Transverse colon (tissue), 4 donors: ENCODE measurements at regions of chr5 and their contacts with region 1.

Region 1: DNA sequence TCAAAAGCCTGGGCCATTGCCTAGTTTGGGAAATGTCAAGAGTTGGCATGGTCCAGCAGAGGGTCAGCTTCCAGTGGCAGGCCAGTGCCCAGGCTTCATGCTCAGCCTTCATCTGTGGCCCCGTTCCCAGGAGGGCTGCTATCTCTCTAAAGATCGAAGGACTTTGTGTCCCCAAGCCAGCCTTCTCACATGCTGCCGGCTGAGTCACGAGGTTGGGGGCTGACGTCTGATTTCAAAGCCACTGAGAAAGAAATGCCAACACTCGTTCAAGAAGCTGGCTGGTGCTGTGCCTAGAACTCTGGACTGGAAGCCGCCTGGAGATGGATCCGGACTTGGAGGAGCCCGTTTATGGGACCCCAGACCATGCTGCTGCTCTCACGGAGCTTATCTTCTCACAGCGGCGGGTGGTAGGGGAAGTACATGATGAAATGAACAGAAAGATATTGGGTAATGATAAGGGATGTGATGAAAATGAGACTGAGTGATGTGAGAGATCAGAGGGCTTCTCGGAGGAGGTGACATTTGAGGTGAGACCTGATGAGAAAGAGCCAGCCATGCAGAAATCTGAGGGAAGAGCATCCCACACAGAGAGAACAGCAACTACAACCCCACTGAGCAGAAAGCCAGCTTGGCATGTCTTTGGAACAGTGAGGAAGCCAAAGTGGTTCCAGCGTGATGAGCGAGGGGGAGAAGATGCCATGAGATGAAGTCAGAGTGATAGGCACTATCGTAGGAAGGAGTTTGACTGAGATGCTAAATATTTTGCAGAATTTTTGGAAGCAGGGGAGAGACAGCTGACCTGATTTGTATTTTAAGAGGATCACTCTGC is 54.9 kb upstream of the BOD1 start:
- DNase-seq: peak; percentile 18
- H3K4me3 ChIP-seq: no peak overlapping the region
- H3K27ac ChIP-seq: no peak overlapping the region
- H3K4me1 ChIP-seq: no peaks in the 10 kb centered on the region
- H3K27me3 ChIP-seq: no peaks in the 10 kb centered on the region
- CTCF ChIP-seq: no peak
- EP300 ChIP-seq: no peak
- POLR2A ChIP-seq: no peak

Region 2: DNA sequence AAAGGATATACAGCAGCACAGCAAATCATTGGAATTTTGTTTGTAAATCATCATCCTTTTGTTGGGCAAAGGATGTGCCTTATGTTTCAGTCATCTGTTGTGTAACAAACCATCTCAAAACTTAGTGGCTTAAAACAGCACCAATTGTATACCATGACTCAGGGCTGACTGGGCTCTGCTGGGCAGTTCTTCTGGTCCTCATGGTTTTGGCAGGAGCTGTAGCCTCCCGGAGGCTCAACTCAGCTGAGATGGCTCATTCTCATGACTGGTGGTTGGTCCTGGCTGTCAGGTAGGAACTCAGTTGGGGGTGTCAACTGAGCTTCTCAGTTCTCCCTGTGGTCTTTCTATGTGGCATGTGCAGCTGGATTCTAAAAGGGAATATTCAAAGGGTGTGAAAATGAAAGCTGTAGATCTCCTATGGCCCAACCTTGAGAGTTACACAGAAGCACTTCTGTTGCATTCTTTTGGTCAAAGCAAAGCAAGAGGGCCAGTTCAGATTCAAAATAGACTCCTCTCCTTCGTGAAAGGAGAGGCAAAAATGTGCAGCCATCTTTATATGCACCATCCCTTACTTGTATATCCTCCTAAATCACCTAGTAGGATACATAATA is 177.8 kb after region 1 on chr5:
- in situ Hi-C with region 1: no loop called
- intact Hi-C with region 1: loop called (anchors 5 kb)
- DNase-seq: no peak
- H3K4me3 ChIP-seq: no peak overlapping the region
- H3K27ac ChIP-seq: no peak overlapping the region
- H3K4me1 ChIP-seq: no peaks in the 10 kb centered on the region
- H3K27me3 ChIP-seq: no peaks in the 10 kb centered on the region
- CTCF ChIP-seq: no peak
- EP300 ChIP-seq: no peak
- POLR2A ChIP-seq: no peak

Region 3: GRCh38 chr5:173953528-173954090 is 282.3 kb after region 1 on chr5:
- in situ Hi-C with region 1: no loop called
- intact Hi-C with region 1: no loop called
- DNase-seq: no peak
- H3K4me3 ChIP-seq: no peak overlapping the region
- H3K27ac ChIP-seq: peak overlapping the region in 2 of 4 donors; percentile 42 to 59
- H3K4me1 ChIP-seq: no peaks in the 10 kb centered on the region
- H3K27me3 ChIP-seq: no peaks in the 10 kb centered on the region
- CTCF ChIP-seq: no peak
- EP300 ChIP-seq: no peak
- POLR2A ChIP-seq: no peak